Endothelial cell of umbilical vein (primary cell): ENCODE measurements at regions of chr16 and their contacts with region 1.

Region 1: GRCh38 chr16:4931381-4931780 is 5.6 kb downstream of the PPL start:
- DNase-seq: no peak
- H3K4me3 ChIP-seq: no peak overlapping the region
- H3K27ac ChIP-seq: no peak overlapping the region
- H3K4me1 ChIP-seq: peaks cover under 1% of the 10 kb centered on the region
- H3K27me3 ChIP-seq: peaks cover 6 to 8% of the 10 kb centered on the region in 2 experiments
- CTCF ChIP-seq: no peak
- POLR2A ChIP-seq: no peak

Region 2: GRCh38 chr16:4888428-4889135 is 42.8 kb before region 1 on chr16:
- CTCF ChIA-PET with region 1: no interaction called
- POLR2A ChIA-PET with region 1: no interaction called
- dilution Hi-C with region 1: no loop called
- intact Hi-C with region 1: no loop called
- DNase-seq: no peak
- H3K4me3 ChIP-seq: no peak overlapping the region
- H3K27ac ChIP-seq: no peak overlapping the region
- H3K4me1 ChIP-seq: no peaks in the 10 kb centered on the region
- H3K27me3 ChIP-seq: no peaks in the 10 kb centered on the region
- CTCF ChIP-seq: no peak
- POLR2A ChIP-seq: no peak

Region 3: GRCh38 chr16:4918750-4919280 is 12.6 kb before region 1 on chr16:
- CTCF ChIA-PET with region 1: interaction called, 10 read pairs
- POLR2A ChIA-PET with region 1: no interaction called
- dilution Hi-C with region 1: no loop called
- intact Hi-C with region 1: no loop called
- DNase-seq: no peak
- H3K4me3 ChIP-seq: no peak overlapping the region
- H3K27ac ChIP-seq: no peak overlapping the region
- H3K4me1 ChIP-seq: no peaks in the 10 kb centered on the region
- H3K27me3 ChIP-seq: no peaks in the 10 kb centered on the region
- CTCF ChIP-seq: no peak
- POLR2A ChIP-seq: no peak